ENCODE measurements at regions of chr22 and their contacts with region 1.

Region 1: DNA sequence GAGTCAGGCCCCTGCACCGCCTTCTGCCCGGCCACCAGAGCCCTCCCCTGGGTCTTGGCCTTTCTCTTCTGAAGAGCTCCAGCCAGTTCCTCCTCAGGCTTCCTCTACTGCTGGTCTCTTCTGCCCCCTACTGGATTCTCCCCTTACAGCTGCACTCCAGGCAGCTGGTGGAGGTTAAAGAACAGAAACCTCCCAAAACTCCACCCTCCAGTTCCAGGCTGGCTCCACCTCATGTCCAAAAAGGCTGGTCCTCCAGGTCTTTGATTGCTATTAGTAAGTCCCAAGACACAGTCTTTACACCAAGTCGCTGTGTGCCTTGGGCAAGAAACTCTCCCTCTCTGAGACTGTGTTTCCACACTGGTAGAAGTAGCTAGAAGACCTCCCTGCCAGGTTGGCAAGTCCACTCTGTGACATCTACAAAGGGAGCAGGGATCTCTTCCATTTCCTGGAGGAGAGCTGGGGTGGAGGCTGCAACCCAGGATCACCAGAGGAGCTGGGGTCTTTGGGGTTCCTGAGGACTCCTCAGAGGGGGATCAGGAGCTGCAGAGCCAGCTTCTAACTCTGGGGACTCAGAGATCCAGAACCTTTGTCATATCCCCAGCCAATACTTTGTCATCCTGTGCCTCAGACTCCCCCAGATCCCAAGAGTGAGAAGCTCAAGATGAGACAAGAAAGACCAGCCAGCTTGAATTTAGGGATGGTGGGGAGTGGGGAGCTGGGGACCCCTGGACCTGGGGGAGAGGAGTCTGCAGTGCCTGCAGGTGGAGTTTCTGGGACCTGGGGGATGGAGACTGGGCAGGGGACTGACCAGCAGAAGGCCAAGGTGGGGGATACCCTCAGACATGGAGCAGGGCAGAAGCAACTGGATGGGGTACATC is 3.4 kb upstream of the IGLL5 start:
- DNase-seq: peak; percentile 65 to 77
- H3K4me3 ChIP-seq: no peak overlapping the region
- H3K4me3 Mint-ChIP-seq: no peak overlapping the region
- H3K27ac Mint-ChIP-seq: no peak overlapping the region
- H3K4me1 ChIP-seq: no peaks in the 10 kb centered on the region
- H3K4me1 Mint-ChIP-seq: no peaks in the 10 kb centered on the region
- H3K27me3 ChIP-seq: no peaks in the 10 kb centered on the region
- H3K27me3 Mint-ChIP-seq: peaks cover 7% of the 10 kb centered on the region
- CTCF ChIP-seq: peak; percentile 66 to 71

Region 2: GRCh38 chr22:22748297-22748743 is 135.9 kb before region 1 on chr22:
- CTCF ChIA-PET with region 1: interaction called, 45 read pairs
- POLR2A ChIA-PET with region 1: no interaction called
- intact Hi-C with region 1: loop called (anchors 2 kb)
- DNase-seq: peak in 1 of 2 experiments; percentile 60
- H3K4me3 ChIP-seq: no peak overlapping the region
- H3K4me3 Mint-ChIP-seq: no peak overlapping the region
- H3K27ac Mint-ChIP-seq: no peak overlapping the region
- H3K4me1 ChIP-seq: no peaks in the 10 kb centered on the region
- H3K4me1 Mint-ChIP-seq: no peaks in the 10 kb centered on the region
- H3K27me3 ChIP-seq: no peaks in the 10 kb centered on the region; the same call in none of the 2 replicates
- H3K27me3 Mint-ChIP-seq: peaks cover 4% of the 10 kb centered on the region
- CTCF ChIP-seq: peak; percentile 69 to 74

Region 3: GRCh38 chr22:22770280-22770871 is 113.9 kb before region 1 on chr22:
- CTCF ChIA-PET with region 1: interaction called, 38 read pairs
- POLR2A ChIA-PET with region 1: no interaction called
- intact Hi-C with region 1: no loop called
- DNase-seq: peak; percentile 66 to 81
- H3K4me3 ChIP-seq: no peak overlapping the region
- H3K4me3 Mint-ChIP-seq: no peak overlapping the region
- H3K27ac Mint-ChIP-seq: no peak overlapping the region
- H3K4me1 ChIP-seq: no peaks in the 10 kb centered on the region
- H3K4me1 Mint-ChIP-seq: no peaks in the 10 kb centered on the region
- H3K27me3 ChIP-seq: no peaks in the 10 kb centered on the region
- H3K27me3 Mint-ChIP-seq: peaks cover 3% of the 10 kb centered on the region
- CTCF ChIP-seq: peak; percentile 88 to 95

Region 4: DNA sequence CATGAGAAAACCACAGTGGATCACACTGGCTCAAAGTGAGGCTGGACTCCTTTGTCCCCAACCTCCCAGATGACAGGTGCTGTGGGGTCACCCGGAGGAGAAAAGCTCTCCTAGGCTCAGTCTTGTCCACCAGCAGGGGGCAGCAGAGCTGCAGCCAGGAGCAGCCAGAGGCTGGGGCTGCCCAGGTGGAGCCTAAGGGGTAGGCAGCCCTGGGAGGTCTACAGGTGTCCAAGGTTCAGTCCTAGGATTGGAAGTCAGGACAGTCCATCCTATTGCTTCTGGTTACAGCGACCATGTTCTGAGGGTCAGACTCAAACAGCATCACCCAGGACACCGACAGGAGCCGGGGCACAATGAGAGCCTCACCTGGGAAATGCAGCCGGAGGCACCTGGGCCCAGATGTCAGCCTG is 74.2 kb before region 1 on chr22:
- CTCF ChIA-PET with region 1: interaction called, 32 read pairs
- POLR2A ChIA-PET with region 1: no interaction called
- intact Hi-C with region 1: loop called (anchors 2 kb)
- DNase-seq: peak; percentile 65 to 79
- H3K4me3 ChIP-seq: no peak overlapping the region
- H3K4me3 Mint-ChIP-seq: no peak overlapping the region
- H3K27ac Mint-ChIP-seq: no peak overlapping the region
- H3K4me1 ChIP-seq: no peaks in the 10 kb centered on the region
- H3K4me1 Mint-ChIP-seq: peaks cover 6% of the 10 kb centered on the region
- H3K27me3 ChIP-seq: no peaks in the 10 kb centered on the region
- H3K27me3 Mint-ChIP-seq: peaks cover 3% of the 10 kb centered on the region
- CTCF ChIP-seq: peak; percentile 83 to 88

Region 5: DNA sequence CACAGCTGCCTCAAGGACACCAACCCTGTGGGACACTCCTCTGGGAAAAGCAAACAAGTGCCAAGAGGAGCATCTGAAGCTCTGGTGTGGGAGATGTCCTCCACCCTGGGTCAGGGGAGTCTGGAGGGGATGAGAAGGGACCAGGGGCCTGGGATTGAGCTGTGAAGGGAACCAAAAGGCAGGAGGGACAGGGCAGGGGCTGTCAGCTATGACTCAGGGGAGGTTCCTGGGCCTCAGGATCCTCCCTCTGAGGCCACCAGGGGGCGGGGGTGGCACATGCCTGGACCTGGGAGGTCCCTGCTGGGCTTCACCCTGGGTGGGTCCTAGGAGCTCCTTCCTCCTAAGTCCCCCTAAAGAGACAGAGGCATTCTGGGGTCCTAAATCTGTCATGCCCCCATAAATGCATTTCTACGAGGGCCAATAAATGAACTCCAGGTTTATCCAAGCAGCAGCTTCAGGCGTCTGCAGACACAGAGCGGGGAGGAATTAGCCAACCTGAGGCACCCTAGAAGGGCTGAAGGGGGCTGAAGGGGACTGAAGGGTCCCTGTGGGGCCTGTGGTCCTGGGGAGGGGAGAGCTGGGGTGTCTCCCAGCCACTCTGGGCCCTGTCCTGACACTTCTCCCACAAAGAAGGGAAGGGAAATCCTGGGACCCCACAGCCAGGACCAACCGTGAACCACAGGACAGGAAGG is 28.5 kb before region 1 on chr22:
- CTCF ChIA-PET with region 1: interaction called, 25 read pairs
- POLR2A ChIA-PET with region 1: no interaction called
- intact Hi-C with region 1: no loop called
- DNase-seq: peak in 1 of 2 experiments; percentile 57
- H3K4me3 ChIP-seq: no peak overlapping the region
- H3K4me3 Mint-ChIP-seq: no peak overlapping the region
- H3K27ac Mint-ChIP-seq: no peak overlapping the region
- H3K4me1 ChIP-seq: no peaks in the 10 kb centered on the region; the same call in 1 of the 2 replicates
- H3K4me1 Mint-ChIP-seq: no peaks in the 10 kb centered on the region
- H3K27me3 ChIP-seq: no peaks in the 10 kb centered on the region
- H3K27me3 Mint-ChIP-seq: peaks cover 4% of the 10 kb centered on the region
- CTCF ChIP-seq: peak; percentile 60 to 83

Region 6: DNA sequence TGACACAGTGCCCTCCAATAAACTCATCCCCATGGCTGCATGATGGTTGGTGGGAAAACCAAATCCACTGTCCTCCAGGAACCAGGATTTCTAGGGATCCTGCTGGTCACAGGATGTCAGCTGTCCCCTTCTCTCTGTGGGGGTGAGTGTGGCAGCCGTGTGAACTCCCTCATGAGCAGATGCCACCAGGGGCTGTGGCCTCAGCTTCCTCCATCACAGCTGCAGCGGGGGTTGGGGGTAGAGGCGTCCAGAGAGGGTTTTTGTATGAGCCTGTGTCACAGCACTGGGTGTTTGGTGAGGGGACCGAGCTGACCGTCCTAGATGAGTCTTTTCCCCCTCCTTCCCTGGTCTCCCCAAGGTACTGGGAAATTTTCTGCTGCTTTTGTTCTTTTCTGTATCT is 29.7 kb after region 1 on chr22:
- CTCF ChIA-PET with region 1: no interaction called
- POLR2A ChIA-PET with region 1: no interaction called
- intact Hi-C with region 1: no loop called
- DNase-seq: no peak
- H3K4me3 ChIP-seq: no peak overlapping the region
- H3K4me3 Mint-ChIP-seq: no peak overlapping the region
- H3K27ac Mint-ChIP-seq: no peak overlapping the region
- H3K4me1 ChIP-seq: no peaks in the 10 kb centered on the region
- H3K4me1 Mint-ChIP-seq: no peaks in the 10 kb centered on the region
- H3K27me3 ChIP-seq: no peaks in the 10 kb centered on the region; the same call in 1 of the 2 replicates
- H3K27me3 Mint-ChIP-seq: peaks cover 6% of the 10 kb centered on the region
- CTCF ChIP-seq: no peak

Measured in Caco-2 (cell line).